ENCODE measurements at regions of chr3 and their contacts with region 1.

Region 1: DNA sequence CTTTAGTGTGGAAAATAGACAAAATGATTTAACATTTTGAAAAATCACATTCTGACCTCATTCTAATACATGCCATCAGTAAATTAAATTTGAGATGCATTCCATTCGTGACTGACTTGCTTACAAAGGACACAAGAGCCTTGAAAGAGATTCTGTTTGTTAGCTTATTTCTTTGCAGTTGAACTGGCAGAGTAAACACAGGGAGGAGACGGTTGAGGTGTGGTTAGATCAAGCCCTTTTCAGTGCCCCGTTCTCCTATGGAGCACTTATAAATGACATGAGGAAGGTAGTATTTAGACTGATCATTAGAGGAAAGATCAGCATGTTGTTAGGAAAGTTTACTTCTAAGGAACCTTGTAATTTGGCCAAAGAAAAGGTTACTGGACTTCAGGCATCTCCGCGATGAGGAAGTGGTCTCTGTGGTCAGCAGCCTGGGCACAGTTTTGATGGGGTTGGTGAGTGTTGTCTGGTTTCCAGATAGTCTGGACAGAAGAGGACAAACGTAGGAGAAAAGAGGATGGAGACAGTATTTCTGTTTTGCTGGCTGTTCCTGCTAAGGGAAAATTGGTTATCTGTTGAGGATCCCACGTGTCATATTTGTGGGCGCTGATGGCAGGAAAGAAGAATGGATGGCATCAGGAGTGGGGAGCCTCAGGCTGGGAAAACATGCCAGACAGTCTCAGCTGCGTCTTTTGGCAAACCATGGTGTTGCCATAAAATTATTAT is 328.9 kb upstream of the TBL1XR1 start:
- DNase-seq: peak; percentile 44
- H3K4me3 Mint-ChIP-seq: no peak overlapping the region
- H3K27ac Mint-ChIP-seq: peak overlapping the region; percentile 82
- H3K4me1 Mint-ChIP-seq: peaks cover 66% of the 10 kb centered on the region
- H3K27me3 Mint-ChIP-seq: no peaks in the 10 kb centered on the region
- CTCF ChIP-seq: no peak

Region 2: GRCh38 chr3:177359593-177360357 is 166.4 kb before region 1 on chr3:
- CTCF ChIA-PET with region 1: interaction called, 10 read pairs
- intact Hi-C with region 1: loop called (anchors 2 kb)
- DNase-seq: peak; percentile 99
- H3K4me3 Mint-ChIP-seq: peak overlapping the region; percentile 63
- H3K27ac Mint-ChIP-seq: peak overlapping the region; percentile 71
- H3K4me1 Mint-ChIP-seq: peaks cover 60% of the 10 kb centered on the region
- H3K27me3 Mint-ChIP-seq: no peaks in the 10 kb centered on the region
- CTCF ChIP-seq: no peak

Region 3: GRCh38 chr3:177633671-177634207 is 107.6 kb after region 1 on chr3:
- CTCF ChIA-PET with region 1: no interaction called
- intact Hi-C with region 1: loop called (anchors 5 kb)
- DNase-seq: peak; percentile 43
- H3K4me3 Mint-ChIP-seq: no peak overlapping the region
- H3K27ac Mint-ChIP-seq: peak overlapping the region; percentile 1
- H3K4me1 Mint-ChIP-seq: peaks cover 14% of the 10 kb centered on the region
- H3K27me3 Mint-ChIP-seq: no peaks in the 10 kb centered on the region
- CTCF ChIP-seq: no peak

Region 4: GRCh38 chr3:177906126-177906511 is 380.0 kb after region 1 on chr3:
- CTCF ChIA-PET with region 1: no interaction called
- intact Hi-C with region 1: loop called (anchors 5 kb)
- DNase-seq: peak; percentile 24
- H3K4me3 Mint-ChIP-seq: no peak overlapping the region
- H3K27ac Mint-ChIP-seq: peak overlapping the region; percentile 36
- H3K4me1 Mint-ChIP-seq: peaks cover 26% of the 10 kb centered on the region
- H3K27me3 Mint-ChIP-seq: no peaks in the 10 kb centered on the region
- CTCF ChIP-seq: no peak

Region 5: DNA sequence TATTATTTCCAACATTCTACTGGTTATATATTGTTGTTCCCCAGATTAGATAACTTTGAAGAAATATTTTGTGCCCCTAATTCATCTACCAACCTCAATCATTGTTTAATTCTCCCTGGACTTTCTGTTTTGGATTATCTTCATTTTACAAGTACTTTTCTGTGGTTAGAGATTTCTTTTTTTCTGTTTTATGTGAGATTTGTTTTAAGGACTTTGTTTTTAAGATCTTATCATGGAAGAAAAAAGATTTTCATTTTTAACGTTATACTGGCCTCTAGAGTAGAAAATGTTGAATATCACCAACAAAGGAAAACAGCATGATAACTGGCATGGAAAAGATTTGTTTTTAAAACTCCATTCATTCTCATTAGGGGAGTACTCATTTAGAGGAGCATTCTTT is 799.2 kb after region 1 on chr3:
- CTCF ChIA-PET with region 1: no interaction called
- intact Hi-C with region 1: loop called (anchors 1 kb)
- DNase-seq: no peak
- H3K4me3 Mint-ChIP-seq: no peak overlapping the region
- H3K27ac Mint-ChIP-seq: no peak overlapping the region
- H3K4me1 Mint-ChIP-seq: no peaks in the 10 kb centered on the region
- H3K27me3 Mint-ChIP-seq: no peaks in the 10 kb centered on the region
- CTCF ChIP-seq: no peak